GM10248 (cell line): ENCODE measurements at regions of chr1 and their contacts with region 1.

Region 1: DNA sequence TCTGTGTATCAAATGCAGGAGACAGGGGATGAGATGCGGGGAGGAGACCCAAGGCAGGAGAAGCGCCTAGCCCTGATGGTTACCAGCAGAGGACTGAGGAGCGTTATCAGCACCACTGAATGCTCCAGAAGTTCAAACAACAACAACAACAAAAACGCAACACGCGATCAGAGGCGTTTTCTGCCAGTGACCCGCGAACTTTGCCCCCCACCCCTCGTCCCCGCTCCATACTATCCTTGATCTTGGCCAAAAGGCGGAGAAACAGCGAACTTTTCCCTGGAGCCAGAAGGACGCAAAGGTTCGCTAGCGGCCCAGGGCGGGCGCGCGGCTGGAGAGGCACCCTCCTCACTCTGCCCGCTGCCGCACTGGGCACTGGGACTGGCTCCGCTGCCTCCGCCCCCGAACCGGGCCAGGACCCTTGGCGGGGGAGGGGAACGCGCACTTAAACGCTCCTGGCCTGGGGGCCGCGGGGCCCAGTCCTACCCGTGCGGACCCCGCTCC is 699 bp downstream of the ECHDC2 start:
- DNase-seq: no peak
- CTCF ChIP-seq: no peak

Region 2: DNA sequence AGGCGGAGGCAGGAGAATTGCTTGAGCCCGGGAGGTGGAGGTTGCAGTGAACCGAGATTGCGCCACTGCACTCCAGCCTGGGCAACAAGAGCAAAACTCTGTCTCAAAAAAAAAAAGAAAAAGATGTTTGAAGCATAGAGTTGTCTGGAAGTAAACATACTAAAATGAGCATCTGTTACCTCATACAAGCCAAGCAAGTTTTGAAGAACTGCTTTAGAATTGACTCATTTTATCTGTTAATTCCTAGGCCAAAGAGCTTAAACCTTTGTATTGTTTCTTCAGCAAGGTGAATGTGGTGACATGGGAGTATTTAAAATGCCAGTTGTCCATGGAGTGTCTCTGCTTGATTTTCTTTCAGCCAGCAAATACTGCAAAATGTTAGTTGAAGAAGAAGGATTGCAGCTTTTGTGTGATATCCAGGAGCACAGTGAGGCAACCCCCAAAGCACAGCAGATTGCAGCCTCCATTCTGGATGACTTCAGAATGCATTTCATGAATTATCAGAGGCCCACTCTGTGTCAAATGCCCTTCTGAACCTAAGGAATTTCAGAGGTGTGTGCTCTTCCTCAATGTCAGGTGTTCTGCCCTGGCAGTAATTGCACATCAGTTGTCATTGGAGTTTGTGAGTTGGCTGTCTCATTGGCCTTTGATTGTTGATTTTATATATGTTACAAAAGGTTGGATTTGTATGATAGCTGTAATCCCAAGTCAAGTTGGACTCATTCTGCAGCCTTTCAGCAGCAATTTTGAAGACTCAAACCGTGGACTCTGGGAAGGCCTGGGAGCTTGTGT is 28.2 kb before region 1 on chr1:
- CTCF ChIA-PET with region 1: interaction called, 14 read pairs
- POLR2A ChIA-PET with region 1: no interaction called
- DNase-seq: no peak
- CTCF ChIP-seq: no peak

Region 3: GRCh38 chr1:53616927-53617326 is 696.1 kb after region 1 on chr1:
- CTCF ChIA-PET with region 1: no interaction called
- POLR2A ChIA-PET with region 1: no interaction called
- DNase-seq: no peak
- CTCF ChIP-seq: no peak